Mammary epithelial cell (primary cell): ENCODE measurements at regions of chr17 and their contacts with region 1.

Region 1: DNA sequence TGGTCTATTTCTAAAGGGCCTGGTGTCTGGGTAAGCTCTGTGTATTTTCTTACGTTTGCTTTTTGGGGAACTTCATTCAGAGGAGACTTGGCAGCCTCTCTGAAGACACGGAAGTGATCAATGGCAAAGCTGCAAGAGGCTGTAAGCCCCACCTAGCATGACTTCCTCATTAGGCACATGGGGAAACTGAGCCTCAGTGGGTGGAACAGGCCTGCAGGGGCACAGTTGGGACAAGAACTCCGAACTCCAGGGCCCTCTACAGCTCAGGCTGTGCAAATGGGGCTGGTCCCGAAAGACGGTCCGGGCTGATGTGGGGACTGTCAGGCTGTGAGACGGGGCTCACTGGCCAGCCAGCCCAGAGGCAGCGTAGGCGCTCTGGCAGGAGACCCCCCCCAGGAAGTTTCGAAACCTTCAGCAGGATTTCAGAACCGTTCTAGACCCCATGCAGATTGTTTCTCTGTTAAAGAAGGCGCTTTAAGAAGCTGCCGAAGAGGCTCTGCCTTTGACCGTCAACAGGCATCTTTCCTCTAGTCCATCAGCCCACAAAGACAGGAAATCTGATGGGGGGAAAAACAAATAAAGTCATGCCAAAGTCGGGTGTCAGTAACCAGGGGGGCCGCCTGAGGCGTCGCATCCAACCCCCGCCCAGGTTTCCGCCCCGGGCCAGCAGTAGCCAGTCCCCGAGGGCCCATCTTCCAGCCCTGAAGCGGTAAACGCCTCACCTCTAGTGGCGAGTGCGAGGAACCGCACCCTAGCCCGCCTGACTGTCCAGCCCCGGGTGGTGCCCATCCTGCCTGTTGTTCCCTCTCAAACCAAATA is 79.8 kb upstream of the TBC1D3K start:
- DNase-seq: peak; percentile 19
- H3K4me3 ChIP-seq: no peak overlapping the region
- H3K27ac ChIP-seq: no peak overlapping the region
- H3K4me1 ChIP-seq: no peaks in the 10 kb centered on the region
- H3K27me3 ChIP-seq: no peaks in the 10 kb centered on the region
- CTCF ChIP-seq: peak; percentile 76 to 80

Region 2: GRCh38 chr17:37643118-37643766 is 201.1 kb before region 1 on chr17 and contains the start of gene DDX52:
- CTCF ChIA-PET with region 1: no interaction called
- dilution Hi-C with region 1: no loop called
- in situ Hi-C with region 1: no loop called
- intact Hi-C with region 1: loop called (anchors 10 kb)
- DNase-seq: peak; percentile 88
- H3K4me3 ChIP-seq: peak within 1 kb of the TSS; percentile 81 to 96 (median 90)
- H3K27ac ChIP-seq: peak within 1 kb of the TSS; percentile 86
- H3K4me1 ChIP-seq: peaks cover 10% of the 10 kb centered on the region
- H3K27me3 ChIP-seq: no peaks in the 10 kb centered on the region
- CTCF ChIP-seq: no peak
- total RNA-seq, gene DDX52: 22.2 to 31.2 TPM

Region 3: GRCh38 chr17:37791447-37792399 is 52.6 kb before region 1 on chr17:
- CTCF ChIA-PET with region 1: no interaction called
- dilution Hi-C with region 1: no loop called
- in situ Hi-C with region 1: no loop called
- intact Hi-C with region 1: loop called (anchors 5 kb)
- DNase-seq: peak; percentile 4
- H3K4me3 ChIP-seq: no peak overlapping the region
- H3K27ac ChIP-seq: no peak overlapping the region
- H3K4me1 ChIP-seq: no peaks in the 10 kb centered on the region
- H3K27me3 ChIP-seq: peaks cover 18% of the 10 kb centered on the region
- CTCF ChIP-seq: peak; percentile 44 to 50

Region 4: GRCh38 chr17:37818689-37819088 is 25.7 kb before region 1 on chr17:
- CTCF ChIA-PET with region 1: interaction called, 4 read pairs
- dilution Hi-C with region 1: no loop called
- in situ Hi-C with region 1: no loop called
- intact Hi-C with region 1: loop called (anchors 2 kb)
- DNase-seq: peak; percentile 93
- H3K4me3 ChIP-seq: no peak overlapping the region
- H3K27ac ChIP-seq: no peak overlapping the region
- H3K4me1 ChIP-seq: peaks cover 21% of the 10 kb centered on the region
- H3K27me3 ChIP-seq: no peaks in the 10 kb centered on the region
- CTCF ChIP-seq: no peak

Region 5: GRCh38 chr17:37833237-37833859 is 11.0 kb before region 1 on chr17:
- CTCF ChIA-PET with region 1: no interaction called
- dilution Hi-C with region 1: no loop called
- in situ Hi-C with region 1: no loop called
- intact Hi-C with region 1: no loop called
- DNase-seq: no peak
- H3K4me3 ChIP-seq: no peak overlapping the region
- H3K27ac ChIP-seq: no peak overlapping the region
- H3K4me1 ChIP-seq: peaks cover 3% of the 10 kb centered on the region
- H3K27me3 ChIP-seq: peaks cover 4% of the 10 kb centered on the region
- CTCF ChIP-seq: no peak

Region 6: DNA sequence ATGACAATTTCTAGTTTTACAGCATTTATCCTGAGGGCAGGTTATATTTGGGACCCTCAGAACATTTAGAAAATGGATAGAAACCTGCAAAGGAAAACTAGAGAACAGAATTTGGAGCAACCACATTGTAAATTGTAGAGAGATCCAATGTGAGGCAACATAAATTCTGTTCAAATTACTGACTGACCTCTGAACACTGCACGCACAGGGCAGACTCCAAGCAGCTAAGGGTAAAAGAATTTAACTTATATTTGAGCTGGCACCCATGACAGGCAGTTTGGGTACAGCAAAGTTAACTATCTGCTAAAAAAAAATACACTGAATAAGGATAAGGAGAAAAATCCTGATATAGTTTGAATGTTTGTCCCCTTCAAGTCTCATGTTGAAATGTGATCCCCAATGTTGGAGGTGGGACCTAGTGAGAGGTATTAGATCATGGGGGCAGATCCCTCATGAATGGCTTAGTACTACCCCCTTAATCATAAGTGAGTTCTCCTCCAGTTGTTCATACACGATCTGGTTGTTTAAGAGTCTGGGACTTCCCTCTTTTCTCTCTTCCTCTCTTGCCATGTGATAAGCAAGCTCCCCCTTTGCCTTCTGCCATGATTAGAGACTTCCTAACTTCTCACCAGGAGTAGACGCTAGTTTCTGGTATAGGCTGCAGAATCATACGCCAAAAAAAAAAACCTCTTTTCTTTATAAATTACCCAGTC is 1481.3 kb after region 1 on chr17:
- CTCF ChIA-PET with region 1: interaction called, 36 read pairs
- dilution Hi-C with region 1: no loop called
- in situ Hi-C with region 1: no loop called
- intact Hi-C with region 1: no loop called
- DNase-seq: no peak
- H3K4me3 ChIP-seq: no peak overlapping the region
- H3K27ac ChIP-seq: no peak overlapping the region
- H3K4me1 ChIP-seq: no peaks in the 10 kb centered on the region
- H3K27me3 ChIP-seq: no peaks in the 10 kb centered on the region
- CTCF ChIP-seq: no peak